PC-3 (cell line): ENCODE measurements at regions of chr2 and their contacts with region 1.

Region 1: GRCh38 chr2:219452838-219453317 is 18.2 kb downstream of the SPEG start:
- DNase-seq: peak; percentile 98
- ATAC-seq: peak; percentile 90
- H3K4me3 ChIP-seq: peak overlapping the region; percentile 47
- H3K27ac ChIP-seq: peak overlapping the region; percentile 92
- H3K4me1 ChIP-seq: peaks cover 50% of the 10 kb centered on the region
- H3K27me3 ChIP-seq: no peaks in the 10 kb centered on the region
- CTCF ChIP-seq: no peak

Region 2: GRCh38 chr2:218959141-218959731 is 493.6 kb before region 1 on chr2 and contains the start of gene CDK5R2:
- CTCF ChIA-PET with region 1: no interaction called
- POLR2A ChIA-PET with region 1: no interaction called
- intact Hi-C with region 1: no loop called
- DNase-seq: peak; percentile 92
- ATAC-seq: peak; percentile 93
- H3K4me3 ChIP-seq: peak within 1 kb of the TSS; percentile 65
- H3K27ac ChIP-seq: no peak within 1 kb of the TSS
- H3K4me1 ChIP-seq: peaks cover 29% of the 10 kb centered on the region
- H3K27me3 ChIP-seq: peaks cover 19% of the 10 kb centered on the region
- CTCF ChIP-seq: no peak
- total RNA-seq, gene CDK5R2: 0.11 and 0.35 TPM in 2 replicates

Region 3: GRCh38 chr2:219402665-219403515 is 50.0 kb before region 1 on chr2:
- CTCF ChIA-PET with region 1: interaction called, 3 read pairs
- POLR2A ChIA-PET with region 1: no interaction called
- intact Hi-C with region 1: loop called (anchors 2 kb)
- DNase-seq: peak; percentile 90
- ATAC-seq: peak; percentile 54
- H3K4me3 ChIP-seq: no peak overlapping the region
- H3K27ac ChIP-seq: no peak overlapping the region
- H3K4me1 ChIP-seq: peaks cover 34% of the 10 kb centered on the region
- H3K27me3 ChIP-seq: no peaks in the 10 kb centered on the region
- CTCF ChIP-seq: peak; percentile 95

Region 4: DNA sequence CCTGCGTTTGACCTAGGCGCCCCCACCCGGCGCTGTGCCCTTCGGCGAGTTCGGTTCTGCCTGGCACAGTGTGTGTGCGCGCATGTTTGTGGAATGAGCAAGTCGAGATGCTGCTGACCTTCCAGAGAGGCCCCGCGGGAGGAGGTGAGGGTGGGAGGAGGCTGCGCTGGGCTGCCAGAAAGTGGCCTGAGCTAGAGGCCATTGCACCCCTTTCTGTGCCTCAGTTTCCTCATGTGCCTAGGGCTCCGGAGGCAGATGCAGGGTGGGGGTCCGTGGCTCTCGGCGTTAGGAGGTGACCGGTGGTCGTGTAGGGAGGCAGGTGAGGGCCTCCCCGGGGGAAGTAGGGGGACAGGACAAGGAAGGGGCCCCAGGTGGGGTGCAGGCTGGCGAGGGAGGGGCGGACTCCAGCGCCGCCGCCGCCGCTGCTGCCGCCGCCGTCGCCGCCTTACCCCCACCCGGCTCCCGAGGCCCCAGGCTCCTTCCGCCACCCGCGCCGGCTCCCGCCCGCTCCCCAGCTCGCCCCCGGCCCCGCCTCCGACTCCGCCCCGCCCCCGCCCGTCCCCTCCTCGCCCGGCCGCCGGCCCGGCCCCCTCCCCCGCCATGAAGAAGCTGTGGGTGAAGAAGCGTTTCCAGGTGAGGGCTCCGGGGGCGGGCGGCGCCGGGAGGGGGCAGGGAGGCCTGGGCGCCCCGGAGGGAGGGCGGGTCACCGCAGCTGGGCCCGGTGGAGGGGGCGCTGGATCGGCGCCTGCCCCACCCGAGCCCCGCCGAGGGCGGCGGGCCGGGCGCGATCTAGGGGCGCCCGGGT is 11.2 kb before region 1 on chr2:
- CTCF ChIA-PET with region 1: interaction called, 3 read pairs
- POLR2A ChIA-PET with region 1: interaction called, 11 read pairs
- intact Hi-C with region 1: no loop called
- DNase-seq: peak; percentile 55
- ATAC-seq: peak; percentile 78
- H3K4me3 ChIP-seq: peak overlapping the region; percentile 75
- H3K27ac ChIP-seq: peak overlapping the region; percentile 33
- H3K4me1 ChIP-seq: peaks cover 18% of the 10 kb centered on the region
- H3K27me3 ChIP-seq: no peaks in the 10 kb centered on the region
- CTCF ChIP-seq: no peak

Region 5: GRCh38 chr2:219612577-219613286 is 159.9 kb after region 1 on chr2:
- CTCF ChIA-PET with region 1: no interaction called
- POLR2A ChIA-PET with region 1: no interaction called
- intact Hi-C with region 1: no loop called
- DNase-seq: no peak
- ATAC-seq: no peak
- H3K4me3 ChIP-seq: no peak overlapping the region
- H3K27ac ChIP-seq: no peak overlapping the region
- H3K4me1 ChIP-seq: no peaks in the 10 kb centered on the region
- H3K27me3 ChIP-seq: no peaks in the 10 kb centered on the region
- CTCF ChIP-seq: no peak